ENCODE measurements at regions of chr15 and their contacts with region 1.

Region 1: DNA sequence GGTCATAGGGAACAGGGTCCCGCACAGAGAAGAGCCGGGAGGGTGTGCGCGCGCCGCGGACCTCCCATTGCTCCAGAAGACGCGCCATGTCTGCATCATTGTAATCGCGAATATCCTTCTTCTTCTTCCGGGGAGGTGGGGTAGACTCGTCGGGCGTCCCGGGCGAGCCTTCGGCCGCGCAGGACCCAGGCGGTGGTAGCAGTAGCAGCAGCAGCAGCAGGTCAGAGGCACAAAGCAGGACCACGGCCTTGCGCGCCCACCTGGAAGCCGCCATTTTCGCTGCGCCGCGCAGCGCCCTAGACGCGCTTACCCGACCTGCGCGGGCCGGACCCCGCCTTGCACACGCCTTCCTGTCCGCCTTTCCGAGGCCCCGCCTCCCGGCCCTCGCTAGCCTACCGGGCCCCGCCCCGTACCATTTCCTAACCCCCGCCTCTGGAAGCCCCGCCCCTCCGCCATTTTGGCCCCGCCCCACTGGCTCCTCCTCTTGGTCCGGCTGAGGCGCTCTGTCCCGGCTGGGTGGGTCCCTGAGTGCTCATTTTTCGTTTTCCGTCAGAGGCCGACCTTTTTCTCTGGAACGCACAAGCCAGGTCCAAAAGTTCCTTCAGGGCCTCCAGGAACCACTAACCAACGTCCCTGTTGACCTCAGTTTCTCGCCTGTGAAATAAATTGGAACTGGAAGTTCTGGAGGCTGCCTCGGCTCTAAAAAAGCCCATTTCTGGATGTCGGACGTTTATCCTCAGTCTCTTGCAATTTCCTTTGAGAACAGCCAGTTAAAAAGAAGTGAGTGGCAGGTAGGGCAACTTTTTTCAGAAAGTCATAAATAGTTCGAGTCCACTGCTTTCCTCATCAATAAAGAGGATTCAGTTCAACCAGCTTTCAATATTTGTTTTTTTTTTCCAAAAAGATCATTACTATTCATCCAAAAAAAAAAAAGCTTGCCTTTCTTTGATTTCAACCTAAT is at the start of gene MESD:
- DNase-seq: peak; percentile 92 to 95 (median 94)
- H3K4me3 ChIP-seq: peak within 1 kb of the TSS; percentile 54 to 97
- H3K4me3 Mint-ChIP-seq: peak within 1 kb of the TSS; percentile 91 to 99 (median 99)
- H3K27ac ChIP-seq: peak within 1 kb of the TSS; percentile 79
- H3K27ac Mint-ChIP-seq: peak within 1 kb of the TSS; percentile 95 to 99 (median 99)
- H3K4me1 ChIP-seq: peaks cover 60% of the 10 kb centered on the region
- H3K4me1 Mint-ChIP-seq: peaks cover 38 to 71% (median 56%) of the 10 kb centered on the region in 4 donors
- H3K27me3 ChIP-seq: no peaks in the 10 kb centered on the region
- H3K27me3 Mint-ChIP-seq: no peaks in the 10 kb centered on the region
- total RNA-seq, gene MESD: 43.3 to 44.6 TPM

Region 2: DNA sequence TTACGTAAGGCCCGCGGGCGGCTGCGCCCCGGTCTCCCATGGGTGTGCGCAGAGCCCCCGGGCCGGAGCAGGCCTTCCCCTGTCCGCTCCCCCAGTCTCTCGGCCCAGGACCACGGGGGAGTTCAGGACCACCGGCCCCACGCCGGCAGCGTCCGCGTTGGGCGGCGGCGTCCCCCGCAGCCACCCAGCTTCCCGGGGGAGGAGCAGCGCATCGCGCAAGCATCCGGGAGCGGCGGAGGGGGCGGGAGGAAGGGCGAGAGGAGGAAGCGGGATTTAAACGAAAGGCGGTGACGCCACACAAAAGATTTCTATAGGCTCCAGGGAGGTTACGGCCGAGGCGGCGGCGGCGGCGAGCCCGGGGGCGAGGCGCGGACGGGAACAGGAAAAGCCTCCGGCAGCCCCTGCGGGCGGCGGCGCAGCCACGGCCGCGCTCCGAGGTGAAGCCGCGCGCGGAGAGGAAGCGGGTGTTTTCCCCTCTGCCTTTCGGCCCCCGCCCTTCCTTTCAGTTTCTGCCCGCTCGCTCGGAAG is 10.9 kb after region 1 on chr15 and contains the start of gene TLNRD1:
- CTCF ChIA-PET with region 1: interaction called, 13 read pairs
- POLR2A ChIA-PET with region 1: interaction called, 109 read pairs
- intact Hi-C with region 1: loop called (anchors 1 kb)
- DNase-seq: peak; percentile 85 to 89 (median 87)
- H3K4me3 ChIP-seq: peak within 1 kb of the TSS; percentile 39 to 91
- H3K4me3 Mint-ChIP-seq: peak within 1 kb of the TSS; percentile 93 to 98 (median 96)
- H3K27ac ChIP-seq: peak within 1 kb of the TSS; percentile 95
- H3K27ac Mint-ChIP-seq: peak within 1 kb of the TSS; percentile 97 to 99 (median 98)
- H3K4me1 ChIP-seq: peaks cover 42% of the 10 kb centered on the region
- H3K4me1 Mint-ChIP-seq: peaks cover 34 to 63% (median 53%) of the 10 kb centered on the region in 4 donors
- H3K27me3 ChIP-seq: no peaks in the 10 kb centered on the region
- H3K27me3 Mint-ChIP-seq: peaks cover 0 to 1% of the 10 kb centered on the region in 2 donors
- total RNA-seq, gene TLNRD1: 29.7 to 29.8 TPM

Region 3: GRCh38 chr15:81029414-81030300 is 39.9 kb after region 1 on chr15:
- CTCF ChIA-PET with region 1: no interaction called
- POLR2A ChIA-PET with region 1: no interaction called
- intact Hi-C with region 1: no loop called
- DNase-seq: no peak
- H3K4me3 ChIP-seq: no peak overlapping the region
- H3K4me3 Mint-ChIP-seq: no peak overlapping the region
- H3K27ac ChIP-seq: no peak overlapping the region
- H3K27ac Mint-ChIP-seq: peak overlapping the region in 1 of 7 donors; percentile 1
- H3K4me1 ChIP-seq: no peaks in the 10 kb centered on the region
- H3K4me1 Mint-ChIP-seq: peaks cover 1 to 7% (median 4%) of the 10 kb centered on the region in 4 donors
- H3K27me3 ChIP-seq: no peaks in the 10 kb centered on the region
- H3K27me3 Mint-ChIP-seq: peaks cover 0 to 6% of the 10 kb centered on the region in 2 donors

Measured in CD4-positive, alpha-beta memory T cell (primary cell).